ENCODE measurements at regions of chr1 and their contacts with region 1.

Region 1: GRCh38 chr1:64242895-64243756 is 39.7 kb downstream of the UBE2U start:
- DNase-seq: no peak
- H3K4me3 ChIP-seq: no peak overlapping the region
- H3K27ac ChIP-seq: no peak overlapping the region
- H3K4me1 ChIP-seq: peaks cover 0 to 6% (median 0%) of the 10 kb centered on the region in 4 donors
- H3K27me3 ChIP-seq: peaks cover 4% of the 10 kb centered on the region
- CTCF ChIP-seq: peak; percentile 35 to 59 (median 44)
- EP300 ChIP-seq: no peak
- POLR2A ChIP-seq: no peak

Region 2: DNA sequence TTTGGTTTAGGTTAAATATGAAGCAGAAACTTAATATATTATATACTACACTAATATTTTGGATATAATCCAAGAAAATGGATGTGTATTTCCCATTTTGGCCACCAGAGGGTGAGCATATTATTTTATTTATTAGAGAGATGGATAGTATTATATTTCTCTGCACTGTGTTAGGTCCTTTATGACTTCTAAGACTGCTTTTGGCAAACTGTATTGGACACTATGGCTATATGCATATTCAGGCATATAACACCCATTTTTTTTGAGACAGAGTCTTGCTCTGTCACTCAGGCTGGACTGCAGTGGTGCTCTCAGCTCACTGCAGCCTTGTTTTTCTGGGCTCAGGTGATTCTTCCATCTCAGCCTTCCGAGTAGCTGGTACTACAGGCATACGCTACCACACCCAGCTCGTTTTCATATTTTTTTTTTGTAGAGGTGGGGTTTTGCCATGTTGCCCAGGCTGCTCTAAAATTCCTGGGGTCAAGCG is 667.7 kb before region 1 on chr1:
- in situ Hi-C with region 1: no loop called
- intact Hi-C with region 1: loop called (anchors 10 kb)
- DNase-seq: no peak
- H3K4me3 ChIP-seq: no peak overlapping the region
- H3K27ac ChIP-seq: no peak overlapping the region
- H3K4me1 ChIP-seq: no peaks in the 10 kb centered on the region
- H3K27me3 ChIP-seq: no peaks in the 10 kb centered on the region
- CTCF ChIP-seq: peak; percentile 75 to 90 (median 83)
- EP300 ChIP-seq: no peak
- POLR2A ChIP-seq: no peak

Region 3: GRCh38 chr1:63615768-63616420 is 627.2 kb before region 1 on chr1:
- in situ Hi-C with region 1: loop called in 3 of 4 experiments (anchors 5 to 25 kb)
- intact Hi-C with region 1: loop called (anchors 5 kb)
- DNase-seq: peak; percentile 52
- H3K4me3 ChIP-seq: no peak overlapping the region
- H3K27ac ChIP-seq: no peak overlapping the region
- H3K4me1 ChIP-seq: peaks cover 0 to 6% (median 2%) of the 10 kb centered on the region in 4 donors
- H3K27me3 ChIP-seq: no peaks in the 10 kb centered on the region
- CTCF ChIP-seq: peak; percentile 75 to 84 (median 79)
- EP300 ChIP-seq: no peak
- POLR2A ChIP-seq: no peak

Region 4: DNA sequence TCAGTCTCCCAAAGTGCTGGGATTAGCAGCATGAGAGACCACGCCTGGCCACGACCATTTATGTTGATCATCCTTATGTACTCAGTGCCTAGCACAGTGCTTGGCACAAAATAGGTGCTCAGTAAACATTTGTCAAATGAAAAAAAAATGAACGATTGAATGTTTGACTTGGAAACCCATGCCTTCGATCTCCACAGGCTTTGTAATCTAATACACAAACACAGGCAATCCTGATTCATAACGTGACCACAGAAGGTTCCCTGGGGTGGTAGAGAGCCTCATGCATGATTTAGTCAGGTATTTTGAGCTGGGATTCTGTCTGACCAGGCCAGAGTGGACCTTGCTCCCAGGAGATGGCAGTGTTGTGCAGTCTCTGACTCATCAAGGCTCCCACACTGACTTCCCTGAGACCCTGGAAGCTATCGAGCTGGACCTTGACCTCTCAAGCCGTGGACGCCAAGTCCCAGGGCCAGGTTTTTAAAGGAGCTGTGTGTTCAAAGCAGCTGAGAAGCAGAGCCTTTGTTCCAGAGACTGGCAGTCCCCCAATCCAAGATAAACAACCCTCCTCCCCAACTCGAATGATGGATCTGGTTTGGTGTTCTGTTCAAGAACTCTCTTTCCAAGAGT is 568.8 kb before region 1 on chr1:
- in situ Hi-C with region 1: loop called in 3 of 4 experiments (anchors 10 to 25 kb)
- intact Hi-C with region 1: loop called (anchors 10 kb)
- DNase-seq: peak; percentile 81
- H3K4me3 ChIP-seq: no peak overlapping the region
- H3K27ac ChIP-seq: peak overlapping the region; percentile 9 to 45 (median 22)
- H3K4me1 ChIP-seq: peaks cover 0 to 11% (median 5%) of the 10 kb centered on the region in 4 donors
- H3K27me3 ChIP-seq: no peaks in the 10 kb centered on the region
- CTCF ChIP-seq: peak; percentile 51 to 66 (median 54)
- EP300 ChIP-seq: no peak
- POLR2A ChIP-seq: no peak

Region 5: GRCh38 chr1:64572222-64572900 is 329.2 kb after region 1 on chr1:
- in situ Hi-C with region 1: no loop called
- intact Hi-C with region 1: no loop called
- DNase-seq: no peak
- H3K4me3 ChIP-seq: no peak overlapping the region
- H3K27ac ChIP-seq: no peak overlapping the region
- H3K4me1 ChIP-seq: peaks cover 0 to 4% (median 0%) of the 10 kb centered on the region in 4 donors
- H3K27me3 ChIP-seq: no peaks in the 10 kb centered on the region
- CTCF ChIP-seq: no peak
- EP300 ChIP-seq: no peak
- POLR2A ChIP-seq: no peak